WTC11 (cell line): ENCODE measurements at regions of chr5 and their contacts with region 1.

Region 1: DNA sequence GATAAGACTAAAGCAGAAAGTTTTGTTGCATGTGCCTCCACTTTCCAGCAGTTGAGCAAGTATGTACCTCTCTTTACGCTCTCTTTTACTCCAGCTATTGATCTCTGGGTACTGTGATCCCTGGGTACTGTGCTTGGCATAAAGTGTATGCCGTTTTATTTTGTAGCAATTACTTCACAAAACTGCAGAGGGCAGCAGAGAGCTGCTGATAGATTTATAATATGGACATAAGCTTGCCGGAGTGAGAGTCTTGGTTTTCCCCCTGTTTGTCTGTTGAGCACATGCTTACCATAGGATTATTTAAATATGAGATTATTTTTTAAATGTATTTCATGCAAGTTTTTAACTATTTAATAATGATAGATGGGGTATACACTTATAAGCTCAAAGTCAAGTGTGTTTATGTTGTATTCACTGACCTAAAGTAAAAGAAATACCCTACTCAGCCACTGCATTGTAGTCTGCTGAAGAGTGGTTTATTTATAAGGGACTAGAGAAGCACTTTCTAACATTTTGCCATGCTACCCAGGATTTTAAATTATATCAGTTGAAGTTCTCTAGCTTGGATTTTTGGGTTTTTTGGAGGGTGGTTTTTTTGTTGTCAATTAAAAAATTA is 13.0 kb downstream of the TTC1 start:
- DNase-seq: peak; percentile 31
- ATAC-seq: peak; percentile 92
- H3K4me3 Mint-ChIP-seq: no peak overlapping the region
- H3K27ac Mint-ChIP-seq: no peak overlapping the region
- H3K4me1 Mint-ChIP-seq: peaks cover 6% of the 10 kb centered on the region
- H3K27me3 Mint-ChIP-seq: no peaks in the 10 kb centered on the region
- CTCF ChIP-seq: peak; percentile 74

Region 2: GRCh38 chr5:160039810-160040470 is 18.0 kb after region 1 on chr5:
- CTCF ChIA-PET with region 1: interaction called, 11 read pairs
- POLR2A ChIA-PET with region 1: no interaction called
- DNase-seq: no peak
- ATAC-seq: no peak
- H3K4me3 Mint-ChIP-seq: no peak overlapping the region
- H3K27ac Mint-ChIP-seq: no peak overlapping the region
- H3K4me1 Mint-ChIP-seq: peaks cover 29% of the 10 kb centered on the region
- H3K27me3 Mint-ChIP-seq: no peaks in the 10 kb centered on the region
- CTCF ChIP-seq: no peak

Region 3: GRCh38 chr5:160081495-160081894 is 59.6 kb after region 1 on chr5:
- CTCF ChIA-PET with region 1: interaction called, 12 read pairs
- POLR2A ChIA-PET with region 1: interaction called, 5 read pairs
- DNase-seq: no peak
- ATAC-seq: no peak
- H3K4me3 Mint-ChIP-seq: no peak overlapping the region
- H3K27ac Mint-ChIP-seq: 0 out of 2 replicates have a peak overlapping the region, but pooled peaks have one; percentile 32
- H3K4me1 Mint-ChIP-seq: peaks cover 29% of the 10 kb centered on the region
- H3K27me3 Mint-ChIP-seq: no peaks in the 10 kb centered on the region; the same call in 1 of the 2 replicates
- CTCF ChIP-seq: no peak

Region 4: DNA sequence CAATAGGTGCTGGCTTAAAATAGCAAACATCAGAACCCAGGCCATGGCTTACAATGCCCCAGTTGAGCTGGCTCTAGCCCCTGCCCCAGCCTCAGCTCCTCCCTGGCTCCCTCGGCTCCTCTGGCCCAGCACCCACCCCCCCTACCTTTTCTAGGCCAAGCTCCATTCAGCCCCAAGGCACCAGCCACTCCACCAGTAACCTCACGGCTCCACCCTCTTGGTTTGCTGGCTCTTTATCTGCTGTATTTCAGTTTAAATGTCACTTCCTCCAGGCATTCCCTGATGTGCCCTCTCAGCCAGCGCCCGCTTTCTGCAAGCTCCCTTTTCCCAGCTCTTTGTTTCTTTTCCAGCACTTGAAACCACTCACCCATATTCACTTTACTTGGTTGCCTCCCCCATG is 337.9 kb after region 1 on chr5:
- CTCF ChIA-PET with region 1: interaction called, 12 read pairs
- POLR2A ChIA-PET with region 1: no interaction called
- DNase-seq: no peak
- ATAC-seq: peak; percentile 63
- H3K4me3 Mint-ChIP-seq: no peak overlapping the region
- H3K27ac Mint-ChIP-seq: no peak overlapping the region
- H3K4me1 Mint-ChIP-seq: peaks cover 18% of the 10 kb centered on the region
- H3K27me3 Mint-ChIP-seq: no peaks in the 10 kb centered on the region; the same call in 1 of the 2 replicates
- CTCF ChIP-seq: no peak

Region 5: DNA sequence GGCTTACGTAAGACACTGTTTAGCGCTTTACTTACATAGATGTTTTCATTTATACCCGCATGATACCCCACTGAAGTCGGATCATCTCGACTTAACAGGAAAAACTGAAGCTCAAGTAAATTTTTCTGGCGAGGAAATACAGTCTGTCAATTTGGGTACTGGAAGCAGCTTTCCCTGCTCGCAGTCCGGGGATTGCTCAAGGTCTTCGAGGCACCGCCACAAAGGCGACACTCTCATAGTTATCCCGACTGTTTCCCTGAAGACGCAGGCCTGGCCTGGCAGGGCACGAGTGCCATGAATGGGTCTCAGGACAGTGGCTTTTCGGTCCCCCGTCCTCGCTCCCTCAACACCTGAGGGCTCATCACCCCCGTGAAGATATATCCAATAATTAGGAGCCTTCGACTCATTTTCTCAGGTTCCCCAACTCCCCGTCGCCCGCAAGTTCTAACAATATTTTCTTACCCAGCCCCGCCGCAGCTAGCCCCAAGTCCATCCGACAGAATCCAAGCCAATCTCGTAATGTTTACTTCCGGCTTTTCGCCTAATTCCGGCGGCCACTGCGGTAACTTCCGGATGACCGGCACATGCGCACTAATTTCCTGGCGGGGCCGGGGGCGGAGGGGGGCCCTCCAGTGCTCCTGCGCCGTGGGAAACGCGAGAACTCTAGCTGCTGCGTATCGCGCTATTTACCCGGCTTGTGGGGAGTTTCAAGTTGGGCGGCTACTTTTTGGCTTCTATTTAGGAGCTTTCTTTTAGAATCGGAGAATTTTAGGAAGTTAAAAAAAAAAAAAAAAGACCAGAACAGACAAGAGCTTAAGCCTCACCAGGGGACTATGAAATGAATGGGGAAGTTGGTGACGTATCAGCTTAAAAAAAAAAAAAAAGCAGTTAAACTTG is 396.9 kb after region 1 on chr5 and contains the start of gene SLU7:
- CTCF ChIA-PET with region 1: interaction called, 15 read pairs
- POLR2A ChIA-PET with region 1: no interaction called
- DNase-seq: peak; percentile 94
- ATAC-seq: peak; percentile 80
- H3K4me3 Mint-ChIP-seq: peak within 1 kb of the TSS; percentile 98
- H3K27ac Mint-ChIP-seq: peak within 1 kb of the TSS; percentile 96
- H3K4me1 Mint-ChIP-seq: peaks cover 42% of the 10 kb centered on the region
- H3K27me3 Mint-ChIP-seq: no peaks in the 10 kb centered on the region
- CTCF ChIP-seq: no peak
- total RNA-seq, gene SLU7: 28.7 to 33.3 TPM (median 32.5 TPM) in 3 replicates